Activated CD8-positive, alpha-beta memory T cell treated with anti-CD3 and anti-CD28 coated beads, Interleukin-2, amount 10 ng/mL, durations not matched to agents 7 days and 5 days (primary cell): ENCODE measurements at regions of chr4 and their contacts with region 1.

Region 1: GRCh38 chr4:173370477-173371291 is at the start of gene SAP30:
- DNase-seq: peak; percentile 98
- ATAC-seq: peak; percentile 79
- H3K4me3 Mint-ChIP-seq: peak within 1 kb of the TSS; percentile 98
- H3K27ac Mint-ChIP-seq: peak within 1 kb of the TSS; percentile 99
- H3K4me1 Mint-ChIP-seq: peaks cover 45% of the 10 kb centered on the region
- H3K27me3 Mint-ChIP-seq: no peaks in the 10 kb centered on the region
- total RNA-seq, gene SAP30: 32.7 to 34.0 TPM

Region 2: GRCh38 chr4:173091362-173091761 is 279.3 kb before region 1 on chr4:
- CTCF ChIA-PET with region 1: no interaction called
- DNase-seq: no peak
- ATAC-seq: no peak
- H3K4me3 Mint-ChIP-seq: no peak overlapping the region
- H3K27ac Mint-ChIP-seq: no peak overlapping the region
- H3K4me1 Mint-ChIP-seq: no peaks in the 10 kb centered on the region
- H3K27me3 Mint-ChIP-seq: peaks cover 4% of the 10 kb centered on the region

Region 3: GRCh38 chr4:173334085-173334772 is 36.5 kb before region 1 on chr4 and contains the start of gene HMGB2:
- CTCF ChIA-PET with region 1: interaction called, 55 read pairs
- DNase-seq: peak; percentile 100
- ATAC-seq: peak; percentile 93
- H3K4me3 Mint-ChIP-seq: peak within 1 kb of the TSS; percentile 87
- H3K27ac Mint-ChIP-seq: peak within 1 kb of the TSS; percentile 98
- H3K4me1 Mint-ChIP-seq: peaks cover 29% of the 10 kb centered on the region
- H3K27me3 Mint-ChIP-seq: no peaks in the 10 kb centered on the region
- total RNA-seq, gene HMGB2: 646 to 837 TPM

Region 4: DNA sequence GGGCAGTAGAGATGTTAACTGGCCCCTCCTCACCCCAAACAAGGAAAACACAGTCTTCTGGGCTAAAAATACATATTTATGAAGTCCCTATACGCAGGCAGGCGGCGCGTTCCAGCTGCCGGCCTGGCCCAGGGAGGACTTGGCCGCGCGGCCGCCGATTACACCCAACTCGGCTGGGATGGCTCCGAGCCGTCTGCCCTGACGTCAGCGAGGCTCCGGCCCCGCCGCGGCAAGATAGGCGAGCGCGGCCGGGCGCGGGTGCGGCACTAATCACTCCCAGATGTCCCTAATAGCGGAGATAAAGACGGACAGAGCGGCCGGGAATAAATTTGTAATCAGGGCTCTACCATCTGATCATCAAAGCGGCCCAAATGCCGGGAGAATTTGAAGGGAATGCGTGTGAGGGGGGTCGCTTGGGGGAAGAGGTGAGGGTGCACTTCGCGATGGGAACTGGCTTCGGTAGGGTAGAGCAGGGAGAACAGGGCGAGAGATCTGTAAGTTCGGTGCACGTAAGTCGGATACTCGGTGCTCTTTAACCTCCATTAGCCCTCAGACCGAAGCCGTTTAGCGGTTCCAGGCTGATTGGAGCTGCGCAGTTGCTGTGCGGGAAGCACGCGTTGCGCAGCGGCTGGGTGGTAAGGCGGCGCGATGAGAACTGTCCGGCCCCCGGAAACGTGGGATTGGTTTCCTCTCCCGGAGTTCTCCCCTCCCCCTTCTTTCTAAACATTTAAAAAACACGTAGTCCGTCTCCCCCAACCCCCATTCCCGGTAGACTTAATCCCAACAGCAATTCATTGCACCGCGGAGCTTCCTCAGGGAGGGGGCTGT is 151.7 kb after region 1 on chr4:
- CTCF ChIA-PET with region 1: no interaction called
- DNase-seq: peak; percentile 34
- ATAC-seq: no peak
- H3K4me3 Mint-ChIP-seq: no peak overlapping the region
- H3K27ac Mint-ChIP-seq: no peak overlapping the region
- H3K4me1 Mint-ChIP-seq: peaks cover 5% of the 10 kb centered on the region
- H3K27me3 Mint-ChIP-seq: peaks cover 97% of the 10 kb centered on the region